Calu3 (cell line): ENCODE measurements at regions of chr16 and their contacts with region 1.

Region 1: DNA sequence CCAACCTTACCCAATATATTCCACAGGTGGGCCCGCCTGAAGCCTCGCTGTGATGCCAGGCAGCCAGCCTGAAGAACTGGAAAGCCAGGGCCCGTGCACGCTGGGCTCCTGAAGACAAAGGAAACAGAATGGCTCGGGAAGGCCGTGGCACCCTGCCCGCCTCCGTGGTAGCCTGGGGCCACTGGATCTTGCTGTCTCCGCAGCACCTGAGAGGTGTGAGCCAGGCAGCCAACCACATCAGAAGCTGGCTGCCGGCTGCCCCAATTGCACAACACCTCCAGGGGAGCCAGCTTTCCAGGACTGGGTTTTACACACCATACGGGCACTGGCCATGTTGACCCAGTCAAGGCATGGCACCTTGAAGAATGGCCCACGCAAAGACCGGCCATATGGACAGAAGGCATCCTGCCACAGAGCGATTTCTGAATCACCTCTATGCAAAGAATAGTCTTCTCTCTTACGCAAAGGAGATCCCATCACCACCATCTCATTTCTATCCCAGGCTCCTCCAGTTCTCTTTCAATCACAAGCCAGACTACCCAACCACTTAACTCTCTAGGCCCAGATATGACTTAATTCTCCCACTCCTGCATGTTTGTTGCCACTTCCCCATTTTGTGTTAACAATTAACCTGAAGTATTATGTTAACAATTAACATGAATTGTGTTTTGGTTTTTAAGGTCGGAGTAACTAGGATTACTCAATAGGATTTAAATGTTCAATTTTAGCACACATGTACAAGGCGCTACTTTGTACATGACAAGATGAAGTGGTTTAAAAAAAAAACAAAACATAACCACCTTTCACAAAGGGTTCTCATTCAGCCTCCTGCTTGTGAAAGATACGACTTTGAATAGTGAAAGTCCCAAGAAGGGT is 32.1 kb downstream of the ZFHX3 start:
- DNase-seq: peak; percentile 82
- H3K4me3 Mint-ChIP-seq: peak overlapping the region; percentile 53
- H3K27ac Mint-ChIP-seq: peak overlapping the region; percentile 76
- H3K4me1 Mint-ChIP-seq: peaks cover 49% of the 10 kb centered on the region
- H3K27me3 Mint-ChIP-seq: no peaks in the 10 kb centered on the region
- CTCF ChIP-seq: no peak

Region 2: DNA sequence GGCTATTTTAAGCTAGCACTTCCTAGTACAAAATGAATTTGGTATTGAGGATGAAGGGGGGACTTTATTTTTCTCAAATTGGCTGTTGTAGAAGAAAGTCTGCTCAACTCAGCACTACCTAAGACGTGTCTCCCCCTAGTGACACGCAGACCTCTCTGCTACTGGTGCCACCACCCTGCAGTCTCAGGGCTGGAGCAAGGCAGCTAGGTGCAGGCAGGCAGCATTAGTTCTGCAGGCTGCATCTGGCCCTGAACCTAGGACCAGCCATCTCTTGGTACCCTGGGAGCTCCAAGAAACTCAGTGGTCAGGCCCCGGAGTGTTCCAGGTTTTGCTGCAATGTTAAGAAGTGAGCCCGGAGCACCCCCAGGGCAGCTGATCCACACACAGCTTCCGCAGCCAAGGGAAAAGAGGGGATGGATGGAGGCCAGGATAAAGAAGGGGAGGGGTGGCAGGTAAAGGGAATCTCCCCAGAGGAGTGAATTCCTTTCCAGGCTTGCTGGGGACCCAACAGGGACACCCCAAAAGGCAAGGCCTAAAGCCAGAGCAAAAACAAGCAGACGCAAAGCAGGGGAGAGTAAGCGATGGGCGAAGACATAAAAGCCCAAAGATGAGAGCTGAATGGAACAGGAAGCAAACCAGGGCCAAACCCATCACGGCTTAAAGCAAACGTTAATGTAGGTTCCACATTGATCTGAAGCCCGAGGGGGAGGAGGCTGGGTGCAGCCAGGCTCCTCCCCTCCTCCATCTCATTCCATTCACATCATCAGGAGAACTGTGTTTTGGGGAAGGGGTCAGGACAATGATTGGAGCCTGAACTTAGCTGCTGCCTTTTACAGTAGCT is 168.4 kb before region 1 on chr16:
- CTCF ChIA-PET with region 1: interaction called, 3 read pairs
- intact Hi-C with region 1: loop called (anchors 5 kb)
- DNase-seq: peak; percentile 60
- H3K4me3 Mint-ChIP-seq: no peak overlapping the region
- H3K27ac Mint-ChIP-seq: no peak overlapping the region
- H3K4me1 Mint-ChIP-seq: peaks cover 42% of the 10 kb centered on the region
- H3K27me3 Mint-ChIP-seq: no peaks in the 10 kb centered on the region
- CTCF ChIP-seq: peak; percentile 31

Region 3: GRCh38 chr16:72942021-72942420 is 73.8 kb before region 1 on chr16:
- CTCF ChIA-PET with region 1: no interaction called
- intact Hi-C with region 1: loop called (anchors 5 kb)
- DNase-seq: peak; percentile 48
- H3K4me3 Mint-ChIP-seq: peak overlapping the region; percentile 49
- H3K27ac Mint-ChIP-seq: peak overlapping the region; percentile 82
- H3K4me1 Mint-ChIP-seq: peaks cover 51% of the 10 kb centered on the region
- H3K27me3 Mint-ChIP-seq: no peaks in the 10 kb centered on the region
- CTCF ChIP-seq: no peak

Region 4: DNA sequence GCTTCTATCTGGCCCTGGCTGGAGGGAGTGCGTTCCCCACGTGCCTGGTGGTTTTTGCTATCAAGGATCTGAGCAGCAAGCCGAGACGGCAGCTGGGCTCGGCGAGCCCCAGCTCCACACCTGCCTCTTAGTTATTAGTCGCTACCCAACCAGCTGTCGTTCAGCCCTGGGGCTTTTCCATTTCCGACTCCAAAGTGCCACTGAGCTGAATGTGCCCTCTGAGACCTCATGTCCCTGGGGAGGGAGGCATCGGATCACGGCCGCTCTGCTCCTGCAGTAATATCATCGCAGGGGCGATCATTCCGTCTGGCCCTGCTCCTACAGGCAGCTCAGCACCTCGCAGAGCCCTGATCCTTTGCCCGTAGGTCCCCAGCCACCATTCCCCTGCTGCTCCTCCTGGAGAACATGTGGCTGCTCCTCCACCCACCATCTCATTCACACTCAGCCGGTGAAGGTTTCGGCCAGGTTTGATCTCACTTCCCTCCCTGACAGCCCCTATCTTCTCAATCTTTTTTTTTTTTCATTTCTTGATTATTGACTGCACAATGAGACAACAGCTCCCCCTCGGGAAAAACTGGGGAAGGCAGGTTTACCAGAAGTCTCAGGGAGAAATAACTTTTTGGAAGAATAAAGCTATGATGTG is 54.6 kb before region 1 on chr16:
- CTCF ChIA-PET with region 1: no interaction called
- intact Hi-C with region 1: no loop called
- DNase-seq: peak; percentile 43
- H3K4me3 Mint-ChIP-seq: peak overlapping the region; percentile 21
- H3K27ac Mint-ChIP-seq: no peak overlapping the region
- H3K4me1 Mint-ChIP-seq: peaks cover 27% of the 10 kb centered on the region
- H3K27me3 Mint-ChIP-seq: no peaks in the 10 kb centered on the region
- CTCF ChIP-seq: peak; percentile 64

Region 5: GRCh38 chr16:72995151-72995881 is 20.5 kb before region 1 on chr16:
- CTCF ChIA-PET with region 1: interaction called, 5 read pairs
- intact Hi-C with region 1: loop called (anchors 2 kb)
- DNase-seq: peak; percentile 18
- H3K4me3 Mint-ChIP-seq: no peak overlapping the region
- H3K27ac Mint-ChIP-seq: no peak overlapping the region
- H3K4me1 Mint-ChIP-seq: peaks cover 64% of the 10 kb centered on the region
- H3K27me3 Mint-ChIP-seq: no peaks in the 10 kb centered on the region
- CTCF ChIP-seq: peak; percentile 64

Region 6: GRCh38 chr16:73096510-73096909 is 80.7 kb after region 1 on chr16:
- CTCF ChIA-PET with region 1: no interaction called
- intact Hi-C with region 1: no loop called
- DNase-seq: no peak
- H3K4me3 Mint-ChIP-seq: no peak overlapping the region
- H3K27ac Mint-ChIP-seq: no peak overlapping the region
- H3K4me1 Mint-ChIP-seq: peaks cover 11% of the 10 kb centered on the region
- H3K27me3 Mint-ChIP-seq: peaks cover 95% of the 10 kb centered on the region
- CTCF ChIP-seq: no peak

Region 7: GRCh38 chr16:73204366-73205156 is 188.7 kb after region 1 on chr16:
- CTCF ChIA-PET with region 1: no interaction called
- intact Hi-C with region 1: no loop called
- DNase-seq: peak; percentile 13
- H3K4me3 Mint-ChIP-seq: no peak overlapping the region
- H3K27ac Mint-ChIP-seq: no peak overlapping the region
- H3K4me1 Mint-ChIP-seq: peaks cover 31% of the 10 kb centered on the region
- H3K27me3 Mint-ChIP-seq: no peaks in the 10 kb centered on the region
- CTCF ChIP-seq: no peak